Psoas muscle (tissue), 8 donors: ENCODE measurements at regions of chr14 and their contacts with region 1.

Region 1: GRCh38 chr14:21039585-21040369 is 2.4 kb upstream of the RNASE7 start:
- DNase-seq: peak; percentile 32 to 70
- ATAC-seq: peak; percentile 62 to 78 (median 68)
- H3K4me3 ChIP-seq: peak overlapping the region; percentile 36
- H3K27ac ChIP-seq: peak overlapping the region; percentile 84
- H3K4me1 ChIP-seq: peaks cover 73% of the 10 kb centered on the region
- H3K27me3 ChIP-seq: no peaks in the 10 kb centered on the region
- CTCF ChIP-seq: peak; percentile 80

Region 2: DNA sequence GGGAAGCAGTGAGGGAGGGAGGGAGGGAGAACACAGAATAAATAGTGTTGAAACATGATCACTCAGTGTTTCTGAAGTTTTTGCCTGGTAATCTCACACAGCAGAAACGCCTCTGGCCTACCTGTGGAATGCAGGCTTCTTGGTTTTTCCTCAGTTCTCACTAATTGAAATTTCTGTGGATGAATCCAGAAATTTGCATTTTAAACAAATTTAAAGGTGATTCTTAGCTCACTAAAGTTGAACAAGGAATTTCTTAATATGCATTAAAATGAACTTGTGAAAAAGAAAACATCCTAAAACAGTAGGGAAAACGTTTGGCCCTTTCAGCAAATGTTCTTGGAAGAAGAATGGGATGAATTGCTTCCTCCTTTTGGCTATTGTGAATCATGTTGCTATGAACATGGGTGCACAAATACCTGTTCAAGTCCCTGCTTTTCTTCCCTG is 480.3 kb before region 1 on chr14:
- intact Hi-C with region 1: no loop called
- DNase-seq: no peak
- ATAC-seq: no peak
- H3K4me3 ChIP-seq: no peak overlapping the region
- H3K27ac ChIP-seq: no peak overlapping the region
- H3K4me1 ChIP-seq: no peaks in the 10 kb centered on the region
- H3K27me3 ChIP-seq: peaks cover 0 to 3% (median 2%) of the 10 kb centered on the region in 3 donors
- CTCF ChIP-seq: no peak

Region 3: DNA sequence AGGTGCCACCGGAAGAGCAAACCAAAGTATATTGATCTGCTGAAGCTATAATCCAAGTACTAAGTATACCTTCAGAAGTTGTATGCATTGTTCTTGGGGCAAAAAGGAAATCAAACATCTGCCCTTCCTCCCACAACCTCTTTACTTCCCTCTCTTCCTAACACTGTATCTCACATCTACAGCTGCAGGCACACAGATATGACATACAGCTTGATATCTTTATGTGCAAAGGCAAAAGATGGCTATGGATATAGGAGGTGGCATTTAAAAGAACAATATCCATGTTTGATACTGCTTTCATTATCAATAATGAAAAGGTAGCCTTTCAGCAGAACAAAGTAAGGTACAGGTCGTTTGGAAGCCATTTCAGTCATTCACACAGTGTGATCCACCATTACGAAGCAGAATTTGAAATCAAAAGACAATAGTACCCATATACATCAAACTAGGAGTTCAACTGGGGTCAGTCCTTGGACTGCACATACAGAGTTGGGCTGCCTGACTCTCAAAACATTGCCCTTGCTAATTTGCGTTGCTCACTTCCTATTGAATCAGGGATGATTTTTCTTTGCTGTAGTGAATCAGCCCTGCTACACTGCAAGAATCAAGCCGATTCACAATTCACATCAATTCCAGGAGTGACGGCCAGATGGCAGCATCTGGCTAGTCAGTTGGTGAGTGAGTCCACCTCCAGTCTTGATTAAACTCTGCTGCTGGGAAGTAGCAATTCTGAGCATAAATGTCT is 342.3 kb before region 1 on chr14:
- intact Hi-C with region 1: loop called in 1 of 2 experiments (anchors 5 kb)
- DNase-seq: peak in 1 of 2 donors; percentile 49
- ATAC-seq: peak; percentile 49 to 84 (median 67)
- H3K4me3 ChIP-seq: no peak overlapping the region
- H3K27ac ChIP-seq: no peak overlapping the region
- H3K4me1 ChIP-seq: no peaks in the 10 kb centered on the region
- H3K27me3 ChIP-seq: no peaks in the 10 kb centered on the region
- CTCF ChIP-seq: peak; percentile 68

Region 4: DNA sequence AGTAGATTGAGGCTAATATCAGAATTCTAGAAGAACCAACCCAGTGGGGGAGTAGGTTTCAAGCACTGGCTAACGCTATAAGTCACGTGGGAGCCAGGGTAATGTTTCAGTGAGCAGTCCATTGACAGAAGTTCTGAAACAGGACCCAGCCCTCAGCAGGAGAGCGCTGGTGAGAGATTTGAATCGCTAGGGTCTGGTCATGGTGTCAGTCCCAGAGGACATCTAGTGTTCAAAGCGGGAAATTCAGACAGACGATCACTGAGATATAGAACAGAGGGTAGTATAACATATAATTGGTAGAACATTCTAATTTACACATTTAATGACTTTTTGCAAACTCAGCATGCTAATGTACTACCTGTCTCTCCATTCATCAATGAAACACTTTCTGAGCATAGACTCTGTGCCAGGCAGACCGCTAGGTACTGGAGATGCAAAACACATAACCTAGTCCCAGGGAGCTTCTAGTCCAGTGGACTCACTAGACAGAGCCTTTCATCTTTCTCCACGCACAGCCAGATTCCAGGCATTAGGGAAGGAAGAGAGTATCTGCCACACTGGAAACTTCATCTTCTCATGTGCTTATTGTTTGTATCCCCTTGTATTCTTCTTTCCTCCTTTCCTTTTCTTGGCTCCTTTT is 184.0 kb before region 1 on chr14:
- intact Hi-C with region 1: loop called (anchors 5 kb)
- DNase-seq: peak in 1 of 2 donors; percentile 24
- ATAC-seq: peak; percentile 74 to 88 (median 80)
- H3K4me3 ChIP-seq: no peak overlapping the region
- H3K27ac ChIP-seq: no peak overlapping the region
- H3K4me1 ChIP-seq: no peaks in the 10 kb centered on the region
- H3K27me3 ChIP-seq: peaks cover 0 to 7% (median 0%) of the 10 kb centered on the region in 3 donors
- CTCF ChIP-seq: peak; percentile 67

Region 5: DNA sequence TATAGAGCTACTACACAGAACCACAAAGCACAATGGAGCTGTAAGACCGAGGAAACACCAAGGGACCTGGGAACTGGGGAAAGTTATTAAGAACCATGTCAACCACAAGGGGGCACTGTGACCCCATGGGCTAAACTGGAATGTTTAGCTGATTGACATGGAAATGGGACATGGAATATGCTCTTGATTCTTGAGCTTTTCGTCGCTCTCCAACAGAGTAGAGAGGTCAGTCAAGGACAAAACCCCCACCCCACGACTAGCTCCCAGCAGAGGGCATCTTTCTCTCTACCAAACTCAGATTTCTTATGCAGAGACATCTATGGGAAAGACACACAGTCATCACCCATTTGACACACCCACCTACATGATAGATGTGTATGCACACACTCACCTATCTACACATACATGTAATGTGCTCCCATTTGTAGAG is 25.0 kb before region 1 on chr14:
- intact Hi-C with region 1: loop called (anchors 1 kb)
- DNase-seq: peak; percentile 81 to 90
- ATAC-seq: peak; percentile 74 to 86 (median 82)
- H3K4me3 ChIP-seq: peak overlapping the region; percentile 23
- H3K27ac ChIP-seq: peak overlapping the region; percentile 63
- H3K4me1 ChIP-seq: peaks cover 54% of the 10 kb centered on the region
- H3K27me3 ChIP-seq: no peaks in the 10 kb centered on the region
- CTCF ChIP-seq: peak; percentile 99

Region 6: GRCh38 chr14:21024585-21025370 is 15.0 kb before region 1 on chr14 and contains the start of gene NDRG2:
- intact Hi-C with region 1: loop called in 1 of 2 experiments (anchors 1 kb)
- DNase-seq: peak; percentile 87 to 94
- ATAC-seq: peak; percentile 77 to 78 (median 78)
- H3K4me3 ChIP-seq: peak within 1 kb of the TSS; percentile 98
- H3K27ac ChIP-seq: peak within 1 kb of the TSS; percentile 98
- H3K4me1 ChIP-seq: peaks cover 59% of the 10 kb centered on the region
- H3K27me3 ChIP-seq: no peaks in the 10 kb centered on the region
- CTCF ChIP-seq: no peak
- total RNA-seq, gene NDRG2: 552 to 931 (median 770) TPM

Region 7: GRCh38 chr14:21071225-21072030 is 31.7 kb after region 1 on chr14:
- intact Hi-C with region 1: no loop called
- DNase-seq: peak; percentile 88 to 90
- ATAC-seq: peak; percentile 60 to 77 (median 62)
- H3K4me3 ChIP-seq: peak overlapping the region; percentile 83
- H3K27ac ChIP-seq: peak overlapping the region; percentile 84
- H3K4me1 ChIP-seq: peaks cover 18% of the 10 kb centered on the region
- H3K27me3 ChIP-seq: no peaks in the 10 kb centered on the region
- CTCF ChIP-seq: peak; percentile 6

Region 8: DNA sequence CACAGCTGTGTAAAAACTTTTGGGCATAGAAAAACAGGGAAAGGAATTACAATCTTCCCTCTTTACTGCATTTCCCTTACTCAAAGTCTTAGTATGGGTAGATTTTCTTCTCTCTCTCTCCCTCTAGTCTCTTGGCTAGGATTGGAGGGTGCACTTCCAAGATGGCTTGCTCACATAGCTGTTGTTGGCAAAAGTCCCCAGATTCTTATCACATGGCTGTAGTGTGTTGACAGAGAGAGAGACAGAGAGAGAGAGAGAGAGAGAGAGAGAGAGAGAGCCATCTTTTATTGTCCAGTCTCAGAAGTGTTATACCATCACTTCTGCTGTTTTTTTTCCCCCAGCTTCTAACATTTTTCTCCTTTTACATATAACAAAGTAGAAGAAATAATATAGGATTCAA is 607.6 kb after region 1 on chr14:
- intact Hi-C with region 1: no loop called
- DNase-seq: no peak
- ATAC-seq: no peak
- H3K4me3 ChIP-seq: no peak overlapping the region
- H3K27ac ChIP-seq: no peak overlapping the region
- H3K4me1 ChIP-seq: no peaks in the 10 kb centered on the region
- H3K27me3 ChIP-seq: no peaks in the 10 kb centered on the region
- CTCF ChIP-seq: no peak